ENCODE measurements at regions of chr11 and their contacts with region 1.

Region 1: GRCh38 chr11:27485930-27486773 is 13.6 kb upstream of the LGR4 start:
- DNase-seq: peak; percentile 71
- H3K4me3 Mint-ChIP-seq: no peak overlapping the region
- H3K27ac Mint-ChIP-seq: no peak overlapping the region
- H3K4me1 Mint-ChIP-seq: no peaks in the 10 kb centered on the region
- H3K27me3 Mint-ChIP-seq: no peaks in the 10 kb centered on the region
- CTCF ChIP-seq: peak; percentile 88

Region 2: DNA sequence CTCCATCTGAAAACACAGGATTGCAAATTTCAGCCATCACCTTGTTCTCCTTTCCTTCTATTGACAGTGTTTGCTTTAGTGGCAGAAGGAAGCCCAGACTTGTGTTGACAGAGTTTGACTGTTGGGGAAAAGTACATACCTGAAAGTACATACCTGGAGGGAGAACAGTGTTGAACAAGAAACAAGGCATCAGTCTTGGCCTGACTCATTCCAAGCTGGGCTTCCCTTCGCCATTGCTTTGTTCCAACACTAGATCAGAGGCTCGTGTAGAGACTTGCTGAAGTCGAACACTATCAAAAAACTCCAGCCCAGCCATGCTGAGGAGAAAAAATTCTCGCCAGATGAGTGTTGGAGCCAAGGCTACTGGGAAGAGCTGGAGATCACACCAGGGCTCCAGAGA is 312.1 kb before region 1 on chr11:
- CTCF ChIA-PET with region 1: interaction called, 20 read pairs
- POLR2A ChIA-PET with region 1: no interaction called
- intact Hi-C with region 1: no loop called
- DNase-seq: peak; percentile 64
- H3K4me3 Mint-ChIP-seq: no peak overlapping the region
- H3K27ac Mint-ChIP-seq: peak overlapping the region; percentile 10
- H3K4me1 Mint-ChIP-seq: peaks cover 15% of the 10 kb centered on the region
- H3K27me3 Mint-ChIP-seq: no peaks in the 10 kb centered on the region
- CTCF ChIP-seq: no peak

Region 3: GRCh38 chr11:27201454-27202236 is 284.5 kb before region 1 on chr11:
- CTCF ChIA-PET with region 1: interaction called, 15 read pairs
- POLR2A ChIA-PET with region 1: interaction called, 3 read pairs
- intact Hi-C with region 1: loop called (anchors 5 kb)
- DNase-seq: peak; percentile 70
- H3K4me3 Mint-ChIP-seq: no peak overlapping the region
- H3K27ac Mint-ChIP-seq: no peak overlapping the region
- H3K4me1 Mint-ChIP-seq: peaks cover 6% of the 10 kb centered on the region
- H3K27me3 Mint-ChIP-seq: no peaks in the 10 kb centered on the region
- CTCF ChIP-seq: no peak

Region 4: GRCh38 chr11:27234043-27234668 is 252.0 kb before region 1 on chr11:
- CTCF ChIA-PET with region 1: interaction called, 10 read pairs
- POLR2A ChIA-PET with region 1: no interaction called
- intact Hi-C with region 1: no loop called
- DNase-seq: peak; percentile 69
- H3K4me3 Mint-ChIP-seq: no peak overlapping the region
- H3K27ac Mint-ChIP-seq: peak overlapping the region; percentile 32
- H3K4me1 Mint-ChIP-seq: peaks cover 8% of the 10 kb centered on the region
- H3K27me3 Mint-ChIP-seq: no peaks in the 10 kb centered on the region
- CTCF ChIP-seq: no peak

Region 5: DNA sequence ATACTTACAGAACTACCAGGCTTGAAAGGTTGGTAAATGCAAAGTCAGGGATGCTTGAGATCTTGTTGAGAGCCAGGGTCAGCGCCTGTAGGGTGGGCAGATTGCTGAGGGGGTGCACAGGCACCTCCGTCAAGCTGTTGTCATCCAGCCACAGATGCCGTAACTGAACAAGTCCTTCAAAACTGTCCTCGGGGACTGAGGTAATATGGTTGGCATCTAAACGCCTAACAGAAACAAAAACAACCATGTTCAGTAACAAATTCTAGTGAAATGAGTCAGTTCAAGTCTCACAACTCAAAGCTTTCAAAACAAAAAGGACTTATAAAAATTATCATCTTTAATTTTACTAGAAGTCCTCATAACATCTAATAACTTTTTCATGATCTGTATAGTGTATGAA is 100.9 kb before region 1 on chr11:
- CTCF ChIA-PET with region 1: interaction called, 12 read pairs
- POLR2A ChIA-PET with region 1: interaction called, 9 read pairs
- intact Hi-C with region 1: no loop called
- DNase-seq: peak; percentile 46
- H3K4me3 Mint-ChIP-seq: peak overlapping the region; percentile 38
- H3K27ac Mint-ChIP-seq: peak overlapping the region; percentile 75
- H3K4me1 Mint-ChIP-seq: peaks cover 9% of the 10 kb centered on the region
- H3K27me3 Mint-ChIP-seq: no peaks in the 10 kb centered on the region
- CTCF ChIP-seq: no peak

Region 6: DNA sequence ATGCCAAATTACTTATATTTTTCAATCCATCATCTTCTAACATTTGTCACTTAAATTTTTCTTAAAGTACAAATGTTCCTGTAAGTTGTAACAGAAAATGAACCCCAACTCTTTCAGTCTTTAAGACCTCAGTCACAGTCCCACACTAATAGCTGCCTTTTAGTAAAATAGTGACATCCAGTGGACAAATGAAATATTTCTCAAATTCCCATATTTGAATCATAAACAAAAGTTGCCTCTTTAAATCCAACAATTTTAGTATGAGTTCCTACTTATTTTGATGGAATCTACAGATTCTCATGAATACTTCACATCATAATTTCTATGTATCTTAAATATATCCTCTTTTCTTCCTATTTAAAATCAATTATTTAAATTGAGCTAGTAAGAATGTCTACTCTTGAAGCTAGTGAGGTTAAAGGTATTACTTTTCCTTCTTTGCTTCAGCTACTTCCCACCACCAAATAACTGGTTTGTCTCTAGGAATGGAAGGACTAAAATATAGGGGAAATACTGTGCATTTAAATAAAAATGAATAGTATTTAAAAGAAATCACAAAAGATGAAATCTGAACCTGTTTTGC is 11.2 kb after region 1 on chr11:
- CTCF ChIA-PET with region 1: interaction called, 119 read pairs
- POLR2A ChIA-PET with region 1: interaction called, 15 read pairs
- intact Hi-C with region 1: no loop called
- DNase-seq: peak; percentile 29
- H3K4me3 Mint-ChIP-seq: no peak overlapping the region
- H3K27ac Mint-ChIP-seq: no peak overlapping the region
- H3K4me1 Mint-ChIP-seq: peaks cover 8% of the 10 kb centered on the region
- H3K27me3 Mint-ChIP-seq: no peaks in the 10 kb centered on the region
- CTCF ChIP-seq: peak; percentile 29

Region 7: DNA sequence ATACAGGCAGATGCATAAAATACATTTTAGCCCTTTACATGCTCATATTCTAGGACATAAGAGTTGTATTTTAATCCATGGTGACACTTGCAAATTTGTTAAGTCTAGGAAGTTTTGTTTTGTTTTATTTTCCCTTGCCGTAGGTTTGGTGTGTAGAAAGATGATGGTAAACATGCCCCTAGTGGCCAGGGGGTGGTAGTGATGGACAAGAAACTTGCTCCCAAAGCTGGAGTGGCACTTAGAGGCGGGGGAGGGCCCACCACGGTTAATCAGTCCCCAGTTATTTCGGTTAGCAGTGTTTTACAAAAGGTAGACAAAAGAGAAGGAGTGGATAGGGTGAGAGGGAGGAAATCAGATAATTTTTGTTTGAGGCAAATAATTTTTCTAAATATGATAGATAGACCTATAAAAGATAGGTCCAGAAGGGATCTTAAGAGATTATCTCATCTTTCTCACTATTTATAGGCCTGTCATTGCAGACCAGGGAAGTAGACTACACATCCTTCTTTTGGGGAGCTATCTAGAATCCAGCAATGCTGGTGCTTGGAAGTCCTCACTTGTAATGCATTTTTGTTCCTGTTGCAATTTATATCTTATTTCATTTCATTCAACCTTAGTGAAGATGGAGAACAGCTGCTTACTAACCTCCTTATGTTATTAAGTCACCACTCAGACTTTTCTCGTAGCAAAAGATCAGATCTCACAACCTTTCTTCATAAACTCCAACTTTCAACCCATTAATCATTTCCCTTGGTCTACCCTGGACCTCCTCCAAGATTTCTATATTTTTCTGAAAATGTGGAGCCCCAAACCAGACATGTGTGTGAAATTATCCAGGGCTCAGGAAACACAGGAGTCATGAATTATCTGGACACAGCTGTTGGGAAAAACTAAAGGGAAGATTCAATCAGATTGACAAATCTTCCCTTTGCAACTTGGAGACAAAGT is 220.0 kb after region 1 on chr11:
- CTCF ChIA-PET with region 1: no interaction called
- POLR2A ChIA-PET with region 1: no interaction called
- intact Hi-C with region 1: no loop called
- DNase-seq: peak; percentile 50
- H3K4me3 Mint-ChIP-seq: no peak overlapping the region
- H3K27ac Mint-ChIP-seq: no peak overlapping the region
- H3K4me1 Mint-ChIP-seq: peaks cover 6% of the 10 kb centered on the region
- H3K27me3 Mint-ChIP-seq: no peaks in the 10 kb centered on the region
- CTCF ChIP-seq: peak; percentile 54